Gastrocnemius medialis (tissue), 4 donors: ENCODE measurements at regions of chr9 and their contacts with region 1.

Region 1: GRCh38 chr9:100426530-100427428 is at the start of gene MSANTD3:
- DNase-seq: peak; percentile 25 to 61
- ATAC-seq: peak; percentile 74 to 77
- H3K4me3 ChIP-seq: peak within 1 kb of the TSS; percentile 67 to 88 (median 80)
- H3K27ac ChIP-seq: peak within 1 kb of the TSS; percentile 80 to 90 (median 85)
- H3K4me1 ChIP-seq: peaks cover 26 to 32% of the 10 kb centered on the region in 2 donors
- H3K27me3 ChIP-seq: no peaks in the 10 kb centered on the region
- CTCF ChIP-seq: peak; percentile 25 to 45 (median 41)
- POLR2A ChIP-seq: peak in 1 of 2 donors; percentile 4
- total RNA-seq, gene MSANTD3: 23.3 to 62.6 (median 40.1) TPM

Region 2: GRCh38 chr9:99368341-99369323 is 1058.1 kb before region 1 on chr9:
- in situ Hi-C with region 1: no loop called
- intact Hi-C with region 1: loop called (anchors 10 kb)
- DNase-seq: peak; percentile 79 to 93
- ATAC-seq: peak; percentile 85 to 92
- H3K4me3 ChIP-seq: peak overlapping the region; percentile 53 to 70 (median 60)
- H3K27ac ChIP-seq: peak overlapping the region; percentile 92 to 99 (median 96)
- H3K4me1 ChIP-seq: peaks cover 37 to 48% of the 10 kb centered on the region in 2 donors
- H3K27me3 ChIP-seq: no peaks in the 10 kb centered on the region
- CTCF ChIP-seq: no peak
- POLR2A ChIP-seq: peak; percentile 92 to 93

Region 3: DNA sequence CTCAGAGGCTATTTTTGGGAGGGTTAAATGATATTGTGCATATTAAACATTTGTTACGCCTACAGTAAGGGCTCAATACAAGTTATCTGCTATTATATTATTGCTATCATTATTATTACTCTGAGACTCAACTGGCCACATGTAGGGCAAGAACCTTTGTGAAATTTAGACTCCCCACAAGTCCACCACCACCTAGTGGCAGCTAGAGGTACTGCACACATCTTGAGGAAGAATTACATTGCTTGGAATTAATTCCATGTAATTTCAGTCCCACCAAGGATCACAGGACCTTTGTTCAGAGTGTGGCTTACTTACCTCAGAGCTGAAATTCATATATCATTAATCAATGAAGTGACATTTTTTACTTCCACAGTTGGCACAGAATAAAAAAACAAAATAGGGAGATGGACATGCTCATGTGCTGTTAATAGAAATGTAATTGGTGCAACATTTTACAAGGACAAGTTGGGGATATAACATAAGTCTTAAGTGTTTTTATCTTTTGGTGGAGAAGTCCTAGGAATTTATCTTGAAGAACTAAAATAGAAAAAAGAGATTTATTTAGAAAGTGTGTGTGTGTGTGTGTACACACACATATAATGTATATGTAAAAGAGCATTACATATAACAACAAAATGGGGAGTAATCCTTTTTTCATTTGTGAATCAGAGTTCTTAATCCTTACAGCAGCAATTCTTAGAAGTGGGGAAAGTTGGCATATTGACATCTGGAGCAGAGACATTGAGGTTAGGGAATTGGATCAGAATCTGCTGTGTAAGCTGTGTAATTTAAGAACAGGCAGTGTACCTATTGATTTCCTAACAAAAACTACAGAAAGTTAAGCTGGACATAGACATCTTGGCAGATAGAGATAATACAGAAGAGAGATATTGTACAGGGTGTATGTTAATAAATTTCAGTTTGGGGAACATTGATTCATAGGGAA is 11.4 kb after region 1 on chr9:
- in situ Hi-C with region 1: no loop called
- intact Hi-C with region 1: loop called (anchors 1 kb)
- DNase-seq: peak; percentile 43 to 66
- ATAC-seq: peak in 1 of 2 donors; percentile 28
- H3K4me3 ChIP-seq: no peak overlapping the region
- H3K27ac ChIP-seq: peak overlapping the region; percentile 71 to 83 (median 75)
- H3K4me1 ChIP-seq: peaks cover 19 to 23% of the 10 kb centered on the region in 2 donors
- H3K27me3 ChIP-seq: no peaks in the 10 kb centered on the region
- CTCF ChIP-seq: peak; percentile 82 to 95 (median 84)
- POLR2A ChIP-seq: no peak

Region 4: GRCh38 chr9:100486479-100487176 is 59.8 kb after region 1 on chr9:
- in situ Hi-C with region 1: no loop called
- intact Hi-C with region 1: loop called (anchors 5 kb)
- DNase-seq: no peak
- ATAC-seq: no peak
- H3K4me3 ChIP-seq: no peak overlapping the region
- H3K27ac ChIP-seq: no peak overlapping the region
- H3K4me1 ChIP-seq: no peaks in the 10 kb centered on the region
- H3K27me3 ChIP-seq: no peaks in the 10 kb centered on the region
- CTCF ChIP-seq: peak in 1 of 5 experiments; percentile 23
- POLR2A ChIP-seq: no peak

Region 5: DNA sequence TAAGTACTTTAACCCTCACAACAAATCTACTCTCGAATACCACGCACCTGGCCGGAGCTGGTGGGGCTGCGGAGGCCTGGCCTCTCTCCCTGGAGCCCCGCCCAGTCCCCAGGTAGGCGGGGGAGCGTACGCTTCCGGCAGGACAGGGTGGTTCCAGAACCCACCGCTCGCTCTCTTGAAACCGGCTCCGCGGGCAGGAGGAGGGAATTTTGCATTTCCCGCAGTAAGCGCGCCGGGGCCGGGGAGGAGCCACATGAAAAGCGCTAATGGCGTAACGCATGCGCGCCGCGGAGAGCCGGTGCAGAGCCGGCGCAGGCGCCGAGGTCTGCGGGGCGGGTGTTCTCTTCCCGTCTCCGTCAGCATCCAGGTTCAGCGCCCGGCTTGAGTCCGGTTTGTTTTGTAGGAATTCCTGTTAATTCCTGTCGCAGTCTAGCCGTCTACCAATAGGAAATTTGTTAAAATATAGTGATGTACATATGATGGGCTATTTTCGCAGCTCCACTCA is 171.9 kb after region 1 on chr9:
- in situ Hi-C with region 1: loop called in 2 of 4 experiments (anchors 10 to 25 kb)
- intact Hi-C with region 1: loop called (anchors 5 kb)
- DNase-seq: peak; percentile 30 to 50
- ATAC-seq: peak; percentile 31 to 35
- H3K4me3 ChIP-seq: peak overlapping the region; percentile 58 to 67 (median 62)
- H3K27ac ChIP-seq: peak overlapping the region in 2 of 4 donors; percentile 3 to 9
- H3K4me1 ChIP-seq: peaks cover 8 to 12% of the 10 kb centered on the region in 2 donors
- H3K27me3 ChIP-seq: no peaks in the 10 kb centered on the region
- CTCF ChIP-seq: no peak
- POLR2A ChIP-seq: no peak